ENCODE measurements at regions of chr3 and their contacts with region 1.

Region 1: GRCh38 chr3:14480207-14481025 is 59.7 kb downstream of the GRIP2 start:
- DNase-seq: no peak
- ATAC-seq: no peak
- H3K4me3 ChIP-seq: no peak overlapping the region
- H3K4me3 Mint-ChIP-seq: no peak overlapping the region
- H3K27ac ChIP-seq: no peak overlapping the region
- H3K27ac Mint-ChIP-seq: no peak overlapping the region
- H3K4me1 ChIP-seq: no peaks in the 10 kb centered on the region
- H3K4me1 Mint-ChIP-seq: no peaks in the 10 kb centered on the region
- H3K27me3 ChIP-seq: no peaks in the 10 kb centered on the region
- H3K27me3 Mint-ChIP-seq: no peaks in the 10 kb centered on the region

Region 2: GRCh38 chr3:14389716-14390115 is 90.7 kb before region 1 on chr3:
- CTCF ChIA-PET with region 1: interaction called in 1 of 2 experiments, 12 read pairs
- POLR2A ChIA-PET with region 1: no interaction called
- DNase-seq: no peak
- ATAC-seq: no peak
- H3K4me3 ChIP-seq: no peak overlapping the region
- H3K4me3 Mint-ChIP-seq: no peak overlapping the region
- H3K27ac ChIP-seq: no peak overlapping the region
- H3K27ac Mint-ChIP-seq: no peak overlapping the region
- H3K4me1 ChIP-seq: no peaks in the 10 kb centered on the region
- H3K4me1 Mint-ChIP-seq: no peaks in the 10 kb centered on the region
- H3K27me3 ChIP-seq: peaks cover 0 to 18% of the 10 kb centered on the region in 2 experiments
- H3K27me3 Mint-ChIP-seq: peaks cover 0 to 2% of the 10 kb centered on the region in 2 donors

Region 3: GRCh38 chr3:14402304-14402811 is 78.1 kb before region 1 on chr3 and contains the start of gene SLC6A6:
- CTCF ChIA-PET with region 1: no interaction called
- POLR2A ChIA-PET with region 1: no interaction called
- DNase-seq: peak; percentile 87 to 98 (median 92)
- ATAC-seq: peak; percentile 76 to 85 (median 82)
- H3K4me3 ChIP-seq: peak within 1 kb of the TSS; percentile 73 to 82
- H3K4me3 Mint-ChIP-seq: peak within 1 kb of the TSS; percentile 92 to 100 (median 97)
- H3K27ac ChIP-seq: peak within 1 kb of the TSS; percentile 71
- H3K27ac Mint-ChIP-seq: peak within 1 kb of the TSS; percentile 96
- H3K4me1 ChIP-seq: peaks cover 8 to 50% of the 10 kb centered on the region in 2 experiments
- H3K4me1 Mint-ChIP-seq: peaks cover 46 to 52% (median 46%) of the 10 kb centered on the region in 3 donors
- H3K27me3 ChIP-seq: no peaks in the 10 kb centered on the region
- H3K27me3 Mint-ChIP-seq: no peaks in the 10 kb centered on the region
- total RNA-seq, gene SLC6A6: 49.3 to 72.5 (median 63.6) TPM

Measured in T-cell (primary cell).